ENCODE measurements at regions of chr16 and their contacts with region 1.

Region 1: GRCh38 chr16:67198238-67198734 is 645 bp upstream of the ELMO3 start:
- DNase-seq: peak; percentile 66 to 93
- ATAC-seq: peak; percentile 76 to 89
- H3K4me3 ChIP-seq: no peak overlapping the region
- H3K27ac ChIP-seq: no peak overlapping the region
- H3K4me1 ChIP-seq: peaks cover 19% of the 10 kb centered on the region
- CTCF ChIP-seq: peak; percentile 76
- EP300 ChIP-seq: no peak
- POLR2A ChIP-seq: no peak
- RAD21 ChIP-seq: peak; percentile 44 to 47; a peak in 3 of 5 replicates

Region 2: DNA sequence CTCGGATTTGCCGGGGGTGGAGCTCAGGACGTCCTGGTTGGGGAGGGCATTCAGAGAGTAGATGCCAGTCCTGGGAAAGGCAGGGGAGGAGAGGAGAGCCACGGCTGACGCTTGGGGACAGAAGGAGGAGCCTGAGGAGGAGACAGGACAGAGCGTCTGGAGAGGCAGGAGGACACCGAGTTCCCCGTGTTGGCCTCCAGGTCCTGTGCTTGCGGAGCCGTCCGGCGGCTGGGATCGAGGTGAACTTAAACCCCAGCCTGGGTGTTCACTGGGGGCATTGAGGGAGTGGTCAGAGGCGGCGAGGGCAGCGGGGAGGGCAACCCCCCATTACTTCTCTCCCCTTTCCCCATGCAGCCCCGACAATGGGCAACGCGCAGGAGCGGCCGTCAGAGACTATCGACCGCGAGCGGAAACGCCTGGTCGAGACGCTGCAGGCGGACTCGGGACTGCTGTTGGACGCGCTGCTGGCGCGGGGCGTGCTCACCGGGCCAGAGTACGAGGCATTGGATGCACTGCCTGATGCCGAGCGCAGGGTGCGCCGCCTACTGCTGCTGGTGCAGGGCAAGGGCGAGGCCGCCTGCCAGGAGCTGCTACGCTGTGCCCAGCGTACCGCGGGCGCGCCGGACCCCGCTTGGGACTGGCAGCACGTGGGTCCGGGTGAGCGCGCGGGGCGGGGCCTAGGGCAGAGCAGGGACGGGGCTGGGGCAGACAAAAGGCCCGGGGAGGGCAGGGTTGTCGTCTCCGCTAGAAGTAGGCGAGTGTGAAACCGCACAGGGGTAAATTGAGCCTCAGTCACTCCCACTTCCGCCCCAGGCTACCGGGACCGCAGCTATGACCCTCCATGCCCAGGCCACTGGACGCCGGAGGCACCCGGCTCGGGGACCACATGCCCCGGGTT is 24.2 kb before region 1 on chr16:
- CTCF ChIA-PET with region 1: interaction called, 10 read pairs
- POLR2A ChIA-PET with region 1: no interaction called
- DNase-seq: peak; percentile 89 to 91
- ATAC-seq: peak; percentile 59 to 82
- H3K4me3 ChIP-seq: peak overlapping the region; percentile 50
- H3K27ac ChIP-seq: peak overlapping the region; percentile 84 to 87
- H3K4me1 ChIP-seq: peaks cover 45% of the 10 kb centered on the region
- CTCF ChIP-seq: peak; percentile 26; the same call in 1 of the 3 replicates
- EP300 ChIP-seq: no peak
- POLR2A ChIP-seq: peak; percentile 62
- RAD21 ChIP-seq: peak in 1 of 2 experiments; percentile 28; a peak in 2 of 5 replicates

Region 3: GRCh38 chr16:67183627-67184328 is 14.5 kb before region 1 on chr16 and contains the start of gene MATCAP1:
- CTCF ChIA-PET with region 1: interaction called, 23 read pairs
- POLR2A ChIA-PET with region 1: no interaction called
- DNase-seq: peak; percentile 98 to 99
- ATAC-seq: peak; percentile 72 to 87
- H3K4me3 ChIP-seq: peak within 1 kb of the TSS; percentile 66
- H3K27ac ChIP-seq: peak within 1 kb of the TSS; percentile 93 to 97
- H3K4me1 ChIP-seq: peaks cover 34% of the 10 kb centered on the region
- CTCF ChIP-seq: no peak
- EP300 ChIP-seq: no peak
- POLR2A ChIP-seq: peak; percentile 45
- RAD21 ChIP-seq: no peak
- polyA plus RNA-seq, gene MATCAP1: 7.2 and 7.5 TPM in 2 replicates

Region 4: DNA sequence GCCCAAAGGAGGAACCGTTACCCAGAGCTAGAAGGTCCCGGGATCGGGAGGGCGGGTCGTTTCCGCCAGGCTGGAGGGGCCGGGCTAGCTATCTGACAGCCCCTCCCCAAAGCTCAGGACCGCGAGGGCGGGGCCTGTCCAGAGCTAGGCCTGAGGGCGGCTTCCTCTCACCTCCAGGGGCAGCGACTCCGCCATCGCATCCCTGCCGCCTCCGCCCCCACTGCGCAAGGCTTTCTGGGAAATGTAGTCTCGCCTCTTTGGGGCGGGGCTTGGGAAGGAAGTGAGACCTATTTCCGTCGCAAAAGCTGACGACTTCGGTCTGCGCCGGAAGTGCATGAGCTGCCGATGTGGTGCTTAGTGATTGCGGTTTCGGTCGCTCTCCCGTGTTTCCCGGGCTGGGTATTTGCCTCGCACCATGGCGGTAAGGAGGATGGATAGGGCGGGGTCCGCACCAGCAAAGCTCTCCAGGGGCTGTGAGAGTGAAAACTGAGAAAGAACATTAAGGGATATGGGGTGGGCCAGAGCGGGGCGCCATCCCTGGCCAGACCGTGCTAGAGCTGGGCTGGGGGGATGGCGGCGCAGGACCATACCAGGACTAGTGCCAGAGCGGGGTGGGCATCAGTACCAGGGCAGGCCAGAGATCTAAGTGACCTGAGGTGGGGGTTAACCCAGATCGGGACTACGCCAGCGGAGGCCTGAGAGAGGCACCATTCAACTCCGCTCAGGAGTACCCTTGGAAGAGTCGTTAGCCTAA is 28.7 kb after region 1 on chr16 and contains the start of gene TMEM208:
- CTCF ChIA-PET with region 1: interaction called, 13 read pairs
- POLR2A ChIA-PET with region 1: interaction called, 6 read pairs
- DNase-seq: peak; percentile 92 to 98
- ATAC-seq: peak; percentile 87 to 97
- H3K4me3 ChIP-seq: peak within 1 kb of the TSS; percentile 83
- H3K27ac ChIP-seq: peak within 1 kb of the TSS; percentile 89 to 95
- H3K4me1 ChIP-seq: peaks cover 13% of the 10 kb centered on the region
- CTCF ChIP-seq: peak; percentile 36; the same call in 1 of the 3 replicates
- EP300 ChIP-seq: no peak
- POLR2A ChIP-seq: no peak; the same call in 1 of the 2 replicates
- RAD21 ChIP-seq: no peak
- polyA plus RNA-seq, gene TMEM208: 70.2 and 73.5 TPM in 2 replicates

Measured in A549 (cell line).